A673 (cell line): ENCODE measurements at regions of chr14 and their contacts with region 1.

Region 1: GRCh38 chr14:26984311-26985177 is 386.7 kb upstream of the NOVA1 start:
- DNase-seq: peak; percentile 66
- H3K4me3 ChIP-seq: no peak overlapping the region
- H3K27ac ChIP-seq: no peak overlapping the region
- H3K4me1 ChIP-seq: no peaks in the 10 kb centered on the region
- H3K27me3 ChIP-seq: no peaks in the 10 kb centered on the region
- CTCF ChIP-seq: peak; percentile 85

Region 2: DNA sequence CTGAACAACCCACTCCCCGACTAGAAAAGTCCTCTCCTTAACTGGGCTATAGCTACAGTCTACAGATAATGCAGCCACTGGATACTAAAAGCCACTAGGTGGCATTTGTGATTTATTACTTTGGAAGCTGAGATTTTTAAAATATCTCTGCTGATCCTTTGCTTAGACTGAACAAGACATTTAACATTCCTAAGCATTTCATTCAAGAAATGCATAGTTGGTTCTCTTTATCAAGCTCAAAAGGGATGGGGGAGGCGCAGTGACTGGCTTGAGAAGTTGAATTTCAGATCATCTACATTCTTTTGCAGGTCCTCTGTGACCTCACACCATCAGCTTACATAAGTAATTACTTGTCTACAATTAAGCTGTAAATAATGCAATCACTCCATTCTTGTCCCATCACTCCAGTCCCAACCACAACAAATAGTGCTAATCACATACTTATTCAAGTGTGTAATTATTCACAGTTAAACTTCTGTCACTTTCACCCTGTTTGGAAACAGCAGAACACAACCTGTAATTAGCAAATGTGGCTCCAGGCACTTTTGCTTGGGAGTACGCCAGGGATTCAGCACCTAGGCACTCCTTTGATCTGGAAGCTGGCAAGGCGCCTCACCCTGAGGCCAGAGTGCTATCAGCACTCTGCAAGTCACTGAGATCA is 590.3 kb before region 1 on chr14:
- CTCF ChIA-PET with region 1: no interaction called
- POLR2A ChIA-PET with region 1: interaction called, 4 read pairs
- intact Hi-C with region 1: loop called (anchors 10 kb)
- DNase-seq: peak; percentile 33
- H3K4me3 ChIP-seq: no peak overlapping the region
- H3K27ac ChIP-seq: no peak overlapping the region
- H3K4me1 ChIP-seq: peaks cover 21% of the 10 kb centered on the region
- H3K27me3 ChIP-seq: peaks cover 42% of the 10 kb centered on the region
- CTCF ChIP-seq: peak; percentile 55

Region 3: DNA sequence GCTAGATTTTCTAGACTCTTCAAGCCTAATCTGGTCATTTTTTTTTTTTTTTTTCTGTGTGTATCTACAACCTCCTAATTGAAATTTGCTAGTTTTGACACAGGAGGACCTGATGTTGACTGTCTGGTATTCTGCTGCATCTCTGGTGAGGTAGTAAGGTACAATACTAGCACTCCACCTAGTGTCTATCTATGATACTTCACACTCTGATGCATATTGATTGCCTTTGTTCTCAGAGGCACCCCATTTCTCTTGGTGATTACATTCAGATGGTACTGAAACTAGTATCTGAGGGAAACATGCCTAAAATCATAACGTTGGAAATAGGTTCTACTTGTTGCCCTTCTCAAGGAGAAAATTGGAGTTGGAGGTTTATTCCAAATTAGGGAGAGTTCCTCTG is 543.8 kb after region 1 on chr14:
- CTCF ChIA-PET with region 1: no interaction called
- POLR2A ChIA-PET with region 1: no interaction called
- intact Hi-C with region 1: loop called (anchors 5 kb)
- DNase-seq: peak; percentile 52
- H3K4me3 ChIP-seq: no peak overlapping the region
- H3K27ac ChIP-seq: no peak overlapping the region
- H3K4me1 ChIP-seq: no peaks in the 10 kb centered on the region
- H3K27me3 ChIP-seq: no peaks in the 10 kb centered on the region
- CTCF ChIP-seq: peak; percentile 55